Posterior vena cava (tissue), 2 donors: ENCODE measurements at regions of chr1 and their contacts with region 1.

Region 1: DNA sequence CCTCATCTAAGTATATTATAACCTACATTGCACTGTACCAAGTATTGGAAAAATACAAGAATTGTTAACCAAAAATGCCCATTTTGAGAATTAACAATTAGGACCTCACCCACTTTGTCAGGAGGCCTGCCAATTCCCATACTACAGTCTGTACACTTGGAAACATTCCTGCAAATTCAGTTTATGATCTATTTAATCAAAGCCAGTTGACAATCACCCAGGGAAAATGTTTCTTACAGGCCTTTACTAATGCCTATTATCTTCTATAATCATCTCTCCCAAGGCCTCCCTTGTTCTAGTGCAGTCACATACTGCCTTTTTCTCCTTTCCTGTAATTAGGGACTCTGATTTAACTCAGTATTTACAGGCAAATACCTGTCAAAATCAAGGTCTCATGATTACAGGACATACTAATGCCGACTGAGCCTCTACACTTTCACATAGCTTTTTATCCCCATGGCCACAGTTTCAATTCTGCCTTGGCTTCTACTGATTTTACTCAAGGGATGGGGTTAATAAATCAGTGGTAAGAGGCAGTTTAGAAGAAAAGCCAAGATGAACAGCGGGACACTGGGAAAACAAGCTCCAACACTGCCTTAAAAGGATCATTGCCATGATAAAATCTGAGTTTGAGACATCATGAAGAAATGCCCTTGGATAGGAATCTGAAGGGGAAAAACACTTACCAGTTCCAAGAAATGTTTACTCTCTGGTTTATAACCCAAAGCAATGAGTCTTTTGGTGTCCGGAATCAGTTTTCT is 338.7 kb downstream of the VAV3 start:
- DNase-seq: no peak

Region 2: GRCh38 chr1:107442551-107442950 is 183.7 kb before region 1 on chr1:
- intact Hi-C with region 1: no loop called
- DNase-seq: no peak

Region 3: DNA sequence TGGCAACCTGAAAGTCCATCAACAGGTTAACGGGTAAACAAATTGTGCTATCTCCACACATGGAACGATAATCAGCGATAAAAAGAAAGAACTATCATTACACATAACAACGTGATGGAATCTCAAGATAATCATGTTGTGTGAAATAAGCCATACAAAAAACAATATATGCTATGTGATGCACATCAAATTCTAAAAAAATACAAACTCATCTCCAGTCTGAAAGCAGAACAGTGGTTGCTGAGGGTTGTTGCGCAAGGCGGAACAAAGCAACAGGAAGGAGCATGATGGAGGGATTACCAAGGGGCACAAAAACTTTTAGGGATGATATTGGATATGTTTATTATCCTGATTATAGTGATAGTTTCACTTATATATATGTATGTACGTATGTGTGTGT is 14.0 kb after region 1 on chr1:
- intact Hi-C with region 1: loop called in 1 of 2 experiments (anchors 1 kb)
- DNase-seq: no peak